Naive thymus-derived CD4-positive, alpha-beta T cell (primary cell): ENCODE measurements at regions of chr5 and their contacts with region 1.

Region 1: DNA sequence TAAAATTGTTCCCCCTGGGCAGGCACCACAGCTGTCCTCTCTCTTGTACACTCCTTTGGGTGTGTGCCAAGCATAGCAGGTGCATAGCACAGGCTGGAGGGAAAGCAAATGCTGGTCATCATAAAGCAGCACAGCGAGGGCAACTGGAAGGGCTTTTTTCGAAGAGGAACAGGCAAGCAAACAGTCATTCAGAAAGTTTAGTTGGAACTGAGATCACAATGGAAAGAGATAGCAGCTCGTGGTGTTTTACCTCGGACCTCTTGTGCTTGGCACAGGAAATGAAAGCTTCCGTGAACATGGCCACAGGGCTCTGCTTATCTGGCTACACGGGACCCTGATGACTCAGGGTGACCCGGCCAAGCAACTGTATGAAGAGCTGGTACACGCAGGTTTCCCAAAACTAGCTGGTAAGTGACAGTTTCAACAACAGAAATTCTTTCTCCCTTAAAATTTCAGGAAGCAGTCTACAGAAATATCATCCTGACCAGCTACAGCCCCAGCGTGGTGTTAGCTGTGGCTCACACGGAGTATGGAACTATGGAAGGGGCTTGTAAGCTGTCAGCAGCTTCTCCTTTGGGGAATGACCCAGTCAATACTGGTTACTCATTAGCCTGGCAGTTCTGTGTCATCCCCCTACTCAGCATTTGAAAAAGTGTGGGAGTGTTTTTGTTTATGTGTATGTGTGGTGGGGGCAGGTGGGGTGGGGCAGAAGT is 48.1 kb downstream of the POC5 start:
- DNase-seq: peak in 3 of 9 donors; percentile 3 to 61 (median 10)
- ATAC-seq: peak; percentile 90
- H3K4me3 ChIP-seq: peak overlapping the region; percentile 52
- H3K4me3 Mint-ChIP-seq: peak overlapping the region; percentile 71 to 91 (median 84)
- H3K27ac ChIP-seq: peak overlapping the region; percentile 42
- H3K27ac Mint-ChIP-seq: peak overlapping the region; percentile 3 to 91 (median 64)
- H3K4me1 ChIP-seq: peaks cover 0 to 11% of the 10 kb centered on the region in 2 donors
- H3K4me1 Mint-ChIP-seq: peaks cover 7 to 26% (median 15%) of the 10 kb centered on the region in 7 donors
- H3K27me3 ChIP-seq: no peaks in the 10 kb centered on the region
- H3K27me3 Mint-ChIP-seq: no peaks in the 10 kb centered on the region

Region 2: DNA sequence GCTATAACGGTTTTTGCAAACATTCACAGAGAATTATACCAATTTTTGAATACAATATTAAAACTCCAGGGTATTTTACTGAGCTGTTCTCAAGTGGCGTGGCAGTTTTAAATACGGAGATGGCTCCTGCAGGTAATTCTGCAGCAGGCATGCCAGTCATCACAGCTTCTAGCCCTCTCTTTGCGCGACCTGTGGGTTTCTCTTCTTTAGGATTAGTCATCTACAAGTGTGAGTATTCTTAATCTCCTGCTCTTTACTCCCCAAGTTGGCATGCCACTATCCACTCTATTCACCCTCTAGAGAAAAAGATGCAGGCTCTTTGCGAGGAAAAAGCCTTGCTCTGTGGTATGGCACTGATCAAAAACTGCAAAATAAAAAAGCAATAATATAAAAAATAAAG is 476.3 kb before region 1 on chr5:
- CTCF ChIA-PET with region 1: no interaction called
- POLR2A ChIA-PET with region 1: no interaction called
- intact Hi-C with region 1: no loop called
- DNase-seq: no peak
- ATAC-seq: no peak
- H3K4me3 ChIP-seq: no peak overlapping the region
- H3K4me3 Mint-ChIP-seq: no peak overlapping the region
- H3K27ac ChIP-seq: no peak overlapping the region
- H3K27ac Mint-ChIP-seq: no peak overlapping the region
- H3K4me1 ChIP-seq: no peaks in the 10 kb centered on the region
- H3K4me1 Mint-ChIP-seq: peaks cover 0 to 2% (median 0%) of the 10 kb centered on the region in 7 donors
- H3K27me3 ChIP-seq: no peaks in the 10 kb centered on the region
- H3K27me3 Mint-ChIP-seq: no peaks in the 10 kb centered on the region

Region 3: DNA sequence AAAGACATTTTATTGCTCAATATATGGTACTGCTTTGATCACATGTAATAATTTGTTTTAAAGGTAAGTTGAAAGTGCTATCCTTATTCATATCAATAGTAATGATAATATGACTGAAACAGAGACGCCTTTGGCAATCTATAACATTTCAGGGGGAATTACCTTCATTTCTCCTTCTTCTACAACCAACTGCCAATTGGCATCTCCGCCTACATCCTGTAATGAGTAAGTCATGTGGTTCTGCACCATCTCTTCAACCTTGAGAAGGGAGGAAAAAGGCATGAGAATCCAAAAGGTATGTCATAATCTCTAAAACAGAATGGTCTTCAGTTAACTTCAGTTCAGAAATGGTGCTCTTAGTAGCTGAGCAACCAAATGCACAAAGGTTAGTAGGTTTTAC is 279.7 kb before region 1 on chr5:
- CTCF ChIA-PET with region 1: no interaction called
- POLR2A ChIA-PET with region 1: no interaction called
- intact Hi-C with region 1: no loop called
- DNase-seq: no peak
- ATAC-seq: no peak
- H3K4me3 ChIP-seq: no peak overlapping the region
- H3K4me3 Mint-ChIP-seq: no peak overlapping the region
- H3K27ac ChIP-seq: no peak overlapping the region
- H3K27ac Mint-ChIP-seq: no peak overlapping the region
- H3K4me1 ChIP-seq: no peaks in the 10 kb centered on the region
- H3K4me1 Mint-ChIP-seq: peaks cover 0 to 7% (median 0%) of the 10 kb centered on the region in 7 donors
- H3K27me3 ChIP-seq: no peaks in the 10 kb centered on the region
- H3K27me3 Mint-ChIP-seq: no peaks in the 10 kb centered on the region

Region 4: GRCh38 chr5:75566710-75567309 is 102.3 kb before region 1 on chr5:
- CTCF ChIA-PET with region 1: no interaction called
- POLR2A ChIA-PET with region 1: no interaction called
- intact Hi-C with region 1: loop called in 1 of 2 experiments (anchors 5 kb)
- DNase-seq: peak in 1 of 9 donors; percentile 66
- ATAC-seq: peak; percentile 84
- H3K4me3 ChIP-seq: no peak overlapping the region
- H3K4me3 Mint-ChIP-seq: peak overlapping the region in 3 of 10 donors; percentile 4 to 76 (median 22)
- H3K27ac ChIP-seq: no peak overlapping the region
- H3K27ac Mint-ChIP-seq: peak overlapping the region in 3 of 9 donors; percentile 57 to 90 (median 57)
- H3K4me1 ChIP-seq: peaks cover 0 to 5% of the 10 kb centered on the region in 2 donors
- H3K4me1 Mint-ChIP-seq: peaks cover 6 to 42% (median 25%) of the 10 kb centered on the region in 7 donors
- H3K27me3 ChIP-seq: no peaks in the 10 kb centered on the region
- H3K27me3 Mint-ChIP-seq: no peaks in the 10 kb centered on the region